ENCODE measurements at regions of chr1 and their contacts with region 1.

Region 1: GRCh38 chr1:3491291-3492246 is 37.1 kb downstream of the ARHGEF16 start:
- DNase-seq: peak; percentile 80
- H3K4me3 ChIP-seq: no peak overlapping the region
- H3K27ac ChIP-seq: no peak overlapping the region
- H3K4me1 ChIP-seq: peaks cover 0 to 8% (median 2%) of the 10 kb centered on the region in 4 donors
- H3K27me3 ChIP-seq: no peaks in the 10 kb centered on the region
- CTCF ChIP-seq: peak; percentile 97 to 100 (median 100)
- EP300 ChIP-seq: no peak
- POLR2A ChIP-seq: no peak

Region 2: DNA sequence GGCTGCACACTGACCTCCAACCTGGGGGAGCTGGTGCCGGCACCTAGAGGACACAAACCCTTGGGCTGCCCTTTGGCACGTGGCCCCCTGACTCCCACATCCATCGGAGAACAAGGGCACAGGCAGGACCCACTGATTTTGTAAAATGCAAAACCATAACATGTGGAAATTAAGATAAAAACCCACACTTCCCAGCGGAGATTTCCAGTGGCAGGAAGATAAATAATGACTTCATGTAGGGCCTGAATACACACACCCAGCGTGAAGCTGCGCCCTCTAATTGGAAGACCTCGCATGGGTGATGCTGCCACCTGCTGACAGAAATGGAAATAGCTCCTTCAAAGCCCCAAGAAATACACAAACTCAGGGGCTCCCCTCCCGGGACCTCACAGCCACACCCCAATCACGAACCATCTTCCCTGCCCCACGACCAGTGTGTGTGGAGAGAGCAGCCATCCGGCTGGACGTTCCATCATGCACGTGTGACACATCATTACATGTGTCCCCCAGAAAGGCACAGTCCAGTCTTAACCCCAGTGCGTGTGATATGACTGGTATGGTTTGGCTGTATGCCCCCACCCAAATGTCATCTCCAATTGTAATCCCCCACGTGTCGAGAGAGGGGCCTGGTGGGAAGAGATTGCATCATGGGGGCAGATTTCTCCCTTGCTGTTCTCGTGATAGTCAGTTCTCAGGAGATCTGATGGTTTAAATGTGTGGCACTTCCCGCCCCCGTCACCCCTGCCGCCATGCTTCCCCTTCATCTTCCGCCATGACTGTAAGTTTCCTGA is 127.5 kb after region 1 on chr1:
- in situ Hi-C with region 1: loop called in 1 of 4 experiments (anchors 10 kb)
- intact Hi-C with region 1: loop called (anchors 5 kb)
- DNase-seq: peak; percentile 73
- H3K4me3 ChIP-seq: no peak overlapping the region
- H3K27ac ChIP-seq: no peak overlapping the region
- H3K4me1 ChIP-seq: peaks cover 10 to 21% (median 17%) of the 10 kb centered on the region in 4 donors
- H3K27me3 ChIP-seq: peaks cover 8% of the 10 kb centered on the region
- CTCF ChIP-seq: peak; percentile 79 to 84 (median 83)
- EP300 ChIP-seq: no peak
- POLR2A ChIP-seq: no peak

Measured in transverse colon (tissue), 4 donors.